Esophagus muscularis mucosa (tissue), 4 donors: ENCODE measurements at regions of chr9 and their contacts with region 1.

Region 1: DNA sequence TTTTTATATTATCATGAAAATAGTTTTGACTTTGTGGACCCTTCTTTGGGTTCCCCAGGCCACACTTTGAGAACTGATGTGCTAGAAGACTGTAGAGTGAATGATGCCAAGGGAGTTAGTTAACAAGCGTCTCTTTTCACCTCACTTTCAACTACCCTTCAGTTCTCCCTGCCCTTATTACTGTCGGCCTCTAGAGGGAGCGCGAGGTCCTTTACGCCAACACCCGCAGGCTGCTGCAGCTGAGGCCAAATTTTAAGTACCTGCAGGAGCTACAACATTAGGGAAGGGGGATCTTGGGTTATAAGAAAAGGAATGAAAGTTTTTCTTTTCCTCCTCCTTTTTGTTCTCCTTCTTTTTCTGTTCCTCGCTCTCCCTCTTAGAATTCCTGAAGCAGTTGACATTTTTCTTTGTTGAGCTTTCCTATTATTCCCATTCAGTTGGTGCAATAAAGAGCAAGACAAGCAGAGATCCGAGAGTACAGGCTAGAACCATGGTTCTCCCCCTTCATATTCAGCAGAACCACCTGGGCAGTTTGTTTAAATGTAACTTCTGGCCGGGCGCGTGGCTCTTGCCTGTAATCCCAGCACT is 84.0 kb downstream of the ZFAND5 start:
- DNase-seq: no peak
- H3K4me3 ChIP-seq: no peak overlapping the region
- H3K27ac ChIP-seq: no peak overlapping the region
- H3K4me1 ChIP-seq: peaks cover 0 to 6% (median 0%) of the 10 kb centered on the region in 4 donors
- H3K27me3 ChIP-seq: no peaks in the 10 kb centered on the region
- CTCF ChIP-seq: peak; percentile 82 to 96 (median 86)
- EP300 ChIP-seq: no peak
- POLR2A ChIP-seq: no peak

Region 2: DNA sequence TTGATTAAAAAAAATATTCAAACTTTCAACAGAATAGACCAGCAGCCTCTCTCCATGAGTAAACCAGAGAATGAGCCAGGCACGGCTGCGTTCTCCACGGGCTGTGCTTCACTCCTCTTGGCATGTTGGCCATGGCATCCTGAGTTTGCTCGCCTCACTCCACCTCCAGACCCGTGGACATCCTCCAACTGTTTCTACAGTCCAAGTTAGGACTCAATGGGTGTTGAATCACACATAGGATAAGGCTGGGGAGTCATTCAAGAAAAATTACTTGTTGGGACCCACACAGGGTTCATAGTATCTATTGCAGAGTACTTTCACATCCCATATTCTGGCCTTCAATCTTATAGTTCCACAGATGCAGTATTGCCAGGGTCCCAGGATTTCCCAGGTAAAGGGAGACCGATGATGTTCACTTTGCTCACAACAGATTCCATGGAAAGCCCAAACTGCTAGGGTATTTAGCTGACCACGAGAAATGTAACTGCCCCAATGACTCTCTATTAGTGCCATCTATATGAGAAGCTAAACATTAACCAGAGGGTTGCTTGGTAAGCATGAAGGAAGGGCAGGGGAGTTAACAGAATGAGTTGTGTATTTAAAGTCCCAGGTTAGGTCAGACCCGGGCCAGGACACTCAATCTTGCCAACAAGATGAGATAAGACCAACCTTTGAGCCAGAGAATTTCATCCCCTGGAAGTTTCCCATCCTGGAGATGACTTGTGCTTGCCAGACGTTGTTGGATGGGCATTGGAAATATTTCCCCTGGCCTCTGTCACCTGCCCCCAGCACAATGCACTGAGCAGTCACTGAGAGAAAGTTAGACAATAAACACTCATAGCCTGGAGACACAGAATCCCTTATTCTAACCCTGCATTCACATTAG is 151.5 kb before region 1 on chr9:
- intact Hi-C with region 1: no loop called
- DNase-seq: no peak
- H3K4me3 ChIP-seq: no peak overlapping the region
- H3K27ac ChIP-seq: no peak overlapping the region
- H3K4me1 ChIP-seq: no peaks in the 10 kb centered on the region
- H3K27me3 ChIP-seq: no peaks in the 10 kb centered on the region
- CTCF ChIP-seq: no peak
- EP300 ChIP-seq: no peak
- POLR2A ChIP-seq: no peak

Region 3: DNA sequence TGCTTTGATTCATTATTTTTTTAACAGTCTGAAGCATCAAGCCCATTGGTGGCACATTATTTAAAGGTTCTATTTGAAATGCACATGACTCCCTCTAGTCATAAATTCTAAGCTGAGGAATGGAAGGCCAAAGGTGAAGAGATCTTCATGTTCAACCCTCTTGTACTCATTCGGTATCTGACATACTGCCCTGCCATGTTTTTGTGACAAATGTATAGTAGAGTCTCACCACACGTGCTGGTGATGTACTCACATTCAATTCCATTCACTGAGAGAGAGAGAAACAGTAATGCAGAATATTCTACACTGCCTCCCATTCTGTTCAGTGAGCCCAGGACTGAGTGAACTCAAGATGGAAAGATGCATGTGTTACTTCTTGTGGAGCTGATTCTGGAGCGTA is 33.5 kb before region 1 on chr9:
- intact Hi-C with region 1: no loop called
- DNase-seq: no peak
- H3K4me3 ChIP-seq: no peak overlapping the region
- H3K27ac ChIP-seq: no peak overlapping the region
- H3K4me1 ChIP-seq: no peaks in the 10 kb centered on the region
- H3K27me3 ChIP-seq: peaks cover 0 to 4% (median 0%) of the 10 kb centered on the region in 4 donors
- CTCF ChIP-seq: no peak
- EP300 ChIP-seq: no peak
- POLR2A ChIP-seq: no peak

Region 4: GRCh38 chr9:72364679-72365524 is 83.9 kb after region 1 on chr9 and contains the start of gene ZFAND5:
- intact Hi-C with region 1: no loop called
- DNase-seq: peak; percentile 100
- H3K4me3 ChIP-seq: peak within 1 kb of the TSS; percentile 78 to 94 (median 93)
- H3K27ac ChIP-seq: peak within 1 kb of the TSS; percentile 99 to 100 (median 100)
- H3K4me1 ChIP-seq: peaks cover 20 to 32% (median 24%) of the 10 kb centered on the region in 4 donors
- H3K27me3 ChIP-seq: no peaks in the 10 kb centered on the region
- CTCF ChIP-seq: peak in 1 of 3 experiments; percentile 10
- EP300 ChIP-seq: peak; percentile 88
- POLR2A ChIP-seq: peak; percentile 99
- total RNA-seq, gene ZFAND5: 176 to 303 (median 225) TPM

Region 5: GRCh38 chr9:72485821-72486593 is 205.0 kb after region 1 on chr9:
- intact Hi-C with region 1: no loop called
- DNase-seq: no peak
- H3K4me3 ChIP-seq: no peak overlapping the region
- H3K27ac ChIP-seq: no peak overlapping the region
- H3K4me1 ChIP-seq: no peaks in the 10 kb centered on the region
- H3K27me3 ChIP-seq: no peaks in the 10 kb centered on the region
- CTCF ChIP-seq: no peak
- EP300 ChIP-seq: no peak
- POLR2A ChIP-seq: no peak

Region 6: DNA sequence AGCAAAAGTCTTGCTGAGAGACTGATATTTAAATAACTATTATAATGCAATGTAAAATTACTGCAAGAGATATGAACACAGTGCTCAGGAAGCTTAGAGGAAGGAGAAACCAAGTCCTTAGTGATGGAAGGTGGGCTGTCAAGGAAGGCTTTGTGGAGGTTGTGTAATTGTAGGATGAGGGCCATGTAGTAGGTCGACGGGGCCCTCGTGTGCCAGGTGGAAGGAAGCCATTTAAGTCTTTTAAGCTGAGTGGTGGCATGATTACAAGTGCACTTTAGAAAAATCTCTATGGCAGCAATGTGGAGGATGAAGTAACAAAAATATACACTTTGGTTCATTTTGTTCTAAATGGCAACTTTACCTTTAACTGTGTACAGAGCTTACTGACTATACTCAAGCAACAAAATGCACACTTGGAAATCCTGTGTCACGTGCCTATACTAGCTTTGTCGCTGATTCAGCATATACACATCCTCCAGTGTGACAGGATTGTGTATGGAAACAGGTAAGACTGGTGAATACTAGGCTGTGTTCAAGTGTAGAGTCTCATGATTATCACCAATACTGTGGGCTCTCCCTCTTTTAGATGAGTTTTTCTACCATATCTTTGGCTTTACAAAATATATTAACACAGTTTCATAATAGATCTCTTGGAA is 319.0 kb after region 1 on chr9:
- intact Hi-C with region 1: loop called (anchors 2 kb)
- DNase-seq: no peak
- H3K4me3 ChIP-seq: no peak overlapping the region
- H3K27ac ChIP-seq: no peak overlapping the region
- H3K4me1 ChIP-seq: no peaks in the 10 kb centered on the region
- H3K27me3 ChIP-seq: no peaks in the 10 kb centered on the region
- CTCF ChIP-seq: no peak
- EP300 ChIP-seq: no peak
- POLR2A ChIP-seq: no peak

Region 7: GRCh38 chr9:72749276-72749675 is 468.3 kb after region 1 on chr9:
- intact Hi-C with region 1: loop called (anchors 5 kb)
- DNase-seq: no peak
- H3K4me3 ChIP-seq: no peak overlapping the region
- H3K27ac ChIP-seq: no peak overlapping the region
- H3K4me1 ChIP-seq: no peaks in the 10 kb centered on the region
- H3K27me3 ChIP-seq: no peaks in the 10 kb centered on the region
- CTCF ChIP-seq: no peak
- EP300 ChIP-seq: no peak
- POLR2A ChIP-seq: no peak

Region 8: GRCh38 chr9:72823971-72824370 is 543.0 kb after region 1 on chr9:
- intact Hi-C with region 1: loop called (anchors 2 kb)
- DNase-seq: no peak
- H3K4me3 ChIP-seq: no peak overlapping the region
- H3K27ac ChIP-seq: no peak overlapping the region
- H3K4me1 ChIP-seq: peaks cover 0 to 4% (median 0%) of the 10 kb centered on the region in 4 donors
- H3K27me3 ChIP-seq: no peaks in the 10 kb centered on the region
- CTCF ChIP-seq: no peak
- EP300 ChIP-seq: no peak
- POLR2A ChIP-seq: no peak